Dorsolateral prefrontal cortex (tissue), 120 donors: ENCODE measurements at regions of chr16 and their contacts with region 1.

Region 1: DNA sequence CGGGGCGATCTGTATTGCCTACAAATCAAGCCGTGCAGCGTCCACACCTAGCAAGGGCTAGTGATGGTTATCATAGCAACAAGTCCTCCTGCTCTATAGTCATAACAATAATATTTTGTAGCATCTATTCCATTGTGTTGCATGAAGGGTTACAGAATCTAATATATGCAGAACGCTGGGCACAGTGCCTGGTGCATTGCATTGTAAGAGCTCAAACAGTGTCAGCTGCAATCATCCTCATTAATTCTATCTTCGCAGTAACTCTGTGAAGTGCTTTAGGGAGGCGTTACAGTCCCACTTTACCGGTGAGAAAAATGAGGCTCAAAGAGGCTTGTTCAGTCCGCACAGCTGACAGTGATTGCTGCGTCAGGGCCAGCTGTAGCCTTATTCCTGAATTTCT is 149.4 kb downstream of the RBFOX1 start:
- DNase-seq: peak in 5 of 10 donors; percentile 10 to 45 (median 41)
- H3K4me3 ChIP-seq: peak overlapping the region in 21 of 59 donors; percentile 2 to 49 (median 20)
- H3K27ac ChIP-seq: peak overlapping the region in 2 of 59 donors; percentile 2 to 51
- H3K27me3 ChIP-seq: no peaks in the 10 kb centered on the region
- CTCF ChIP-seq: no peak

Region 2: GRCh38 chr16:7423434-7424044 is 58.5 kb before region 1 on chr16:
- intact Hi-C with region 1: loop called in 1 of 2 experiments (anchors 10 kb)
- DNase-seq: no peak
- H3K4me3 ChIP-seq: peak overlapping the region in 8 of 59 donors; percentile 3 to 30 (median 18)
- H3K27ac ChIP-seq: peak overlapping the region in 21 of 59 donors; percentile 1 to 59 (median 23)
- H3K27me3 ChIP-seq: peaks cover 0 to 7% (median 0%) of the 10 kb centered on the region in 45 donors
- CTCF ChIP-seq: no peak